ENCODE measurements at regions of chr17 and their contacts with region 1.

Region 1: GRCh38 chr17:59914274-59914854 is 21.4 kb downstream of the RPS6KB1 start:
- DNase-seq: peak; percentile 24
- H3K4me3 ChIP-seq: no peak overlapping the region
- H3K27ac ChIP-seq: no peak overlapping the region
- H3K4me1 ChIP-seq: no peaks in the 10 kb centered on the region
- H3K27me3 ChIP-seq: no peaks in the 10 kb centered on the region
- CTCF ChIP-seq: peak; percentile 60 to 61

Region 2: GRCh38 chr17:59825533-59826322 is 88.6 kb before region 1 on chr17:
- CTCF ChIA-PET with region 1: no interaction called
- dilution Hi-C with region 1: no loop called
- in situ Hi-C with region 1: no loop called
- intact Hi-C with region 1: no loop called
- DNase-seq: peak; percentile 90
- H3K4me3 ChIP-seq: no peak overlapping the region
- H3K27ac ChIP-seq: peak overlapping the region; percentile 63
- H3K4me1 ChIP-seq: peaks cover 43% of the 10 kb centered on the region
- H3K27me3 ChIP-seq: no peaks in the 10 kb centered on the region
- CTCF ChIP-seq: no peak

Region 3: DNA sequence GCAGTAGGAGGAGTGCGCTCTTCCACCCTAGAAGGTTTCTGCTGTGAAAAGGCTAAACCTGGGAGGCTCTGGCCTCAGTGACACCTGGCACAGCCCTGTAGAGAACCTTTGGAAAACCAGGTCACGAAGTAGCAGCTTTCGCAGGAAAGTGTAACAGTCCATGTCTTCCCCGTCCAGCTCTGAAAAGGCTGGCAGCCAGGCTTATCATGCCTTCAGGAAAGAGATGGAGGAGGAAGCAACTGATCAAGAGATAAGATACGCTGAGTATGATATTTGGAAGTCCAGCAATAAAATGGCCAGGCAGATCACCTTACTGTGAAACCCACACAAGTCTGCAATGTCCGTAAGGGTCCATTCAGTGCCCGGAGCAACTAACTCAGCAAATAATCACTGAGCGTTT is 43.9 kb before region 1 on chr17:
- CTCF ChIA-PET with region 1: no interaction called
- dilution Hi-C with region 1: loop called (anchors 5 kb)
- in situ Hi-C with region 1: no loop called
- intact Hi-C with region 1: no loop called
- DNase-seq: no peak
- H3K4me3 ChIP-seq: no peak overlapping the region
- H3K27ac ChIP-seq: no peak overlapping the region
- H3K4me1 ChIP-seq: no peaks in the 10 kb centered on the region
- H3K27me3 ChIP-seq: no peaks in the 10 kb centered on the region
- CTCF ChIP-seq: no peak

Region 4: DNA sequence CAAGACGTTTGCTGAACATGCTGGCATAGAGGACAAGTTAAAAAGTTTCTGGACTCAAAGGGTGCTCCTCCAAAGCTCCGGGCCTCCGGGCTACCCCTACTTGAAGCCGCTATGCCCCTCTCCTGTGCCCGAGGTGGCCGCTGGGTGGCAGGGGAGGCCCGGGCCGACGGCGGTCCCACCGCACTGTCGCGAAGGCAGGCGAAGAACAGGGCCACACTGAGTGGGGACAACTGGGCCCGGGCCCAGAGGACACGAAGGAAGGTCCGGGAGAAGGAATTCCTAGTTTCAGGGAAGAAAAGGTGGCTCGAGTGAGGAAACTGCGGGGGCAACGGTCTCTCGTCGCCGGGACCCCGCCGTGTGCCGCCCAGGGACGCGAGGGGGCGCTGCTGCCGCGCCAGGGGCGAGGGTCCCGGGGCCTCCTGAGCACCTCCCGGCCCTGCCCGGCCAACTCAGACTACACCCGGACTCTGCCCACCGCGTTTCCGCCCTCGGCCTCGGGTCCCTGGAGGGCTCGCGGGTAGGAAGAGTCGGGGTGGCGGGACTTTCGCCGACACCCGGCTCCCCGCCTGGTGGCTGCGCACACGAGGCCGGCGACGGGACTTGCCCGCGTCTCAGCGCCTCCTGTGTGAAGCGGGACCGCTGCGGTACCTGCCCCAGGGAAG is 507.0 kb after region 1 on chr17:
- CTCF ChIA-PET with region 1: no interaction called
- dilution Hi-C with region 1: no loop called
- in situ Hi-C with region 1: no loop called
- intact Hi-C with region 1: no loop called
- DNase-seq: peak; percentile 26
- H3K4me3 ChIP-seq: peak overlapping the region; percentile 29 to 45 (median 35)
- H3K27ac ChIP-seq: no peak overlapping the region
- H3K4me1 ChIP-seq: peaks cover 9% of the 10 kb centered on the region
- H3K27me3 ChIP-seq: no peaks in the 10 kb centered on the region
- CTCF ChIP-seq: peak; percentile 35 to 74